ENCODE measurements at regions of chr1 and their contacts with region 1.

Region 1: DNA sequence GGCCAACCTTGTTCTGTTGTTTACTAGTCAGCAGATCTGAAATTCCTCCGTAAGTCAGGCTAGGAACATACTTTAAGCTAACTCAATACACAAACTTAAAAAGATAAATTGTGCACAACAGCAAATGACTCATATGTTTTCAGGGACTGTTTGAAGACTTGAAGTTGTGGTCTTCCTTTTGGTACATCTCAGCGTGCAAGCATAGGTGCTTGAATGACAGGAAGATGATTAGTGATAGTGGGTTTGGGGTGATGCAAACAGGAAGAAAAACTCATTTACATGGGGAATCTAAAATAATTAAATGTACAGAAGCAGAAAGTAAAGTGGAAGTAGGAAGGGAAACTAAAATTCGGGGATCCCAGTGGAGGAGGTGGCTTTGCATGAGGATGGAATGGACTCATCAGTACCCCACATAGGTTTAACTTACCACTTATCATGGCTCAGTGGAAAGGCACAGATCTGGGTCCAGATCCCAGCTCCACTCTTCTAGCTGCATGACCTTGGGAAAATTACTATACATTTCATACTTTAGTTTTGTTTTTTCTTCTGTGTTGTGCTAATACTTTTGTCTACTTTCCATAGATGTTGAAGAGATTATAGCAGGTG is 122.3 kb downstream of the XCL2 start:
- DNase-seq: peak; percentile 29
- H3K4me3 Mint-ChIP-seq: peak overlapping the region; percentile 49
- H3K27ac Mint-ChIP-seq: peak overlapping the region; percentile 78
- H3K4me1 Mint-ChIP-seq: peaks cover 33% of the 10 kb centered on the region
- H3K27me3 Mint-ChIP-seq: no peaks in the 10 kb centered on the region

Region 2: GRCh38 chr1:168372307-168372706 is 49.2 kb before region 1 on chr1:
- CTCF ChIA-PET with region 1: no interaction called
- POLR2A ChIA-PET with region 1: no interaction called
- intact Hi-C with region 1: no loop called
- DNase-seq: no peak
- H3K4me3 Mint-ChIP-seq: no peak overlapping the region
- H3K27ac Mint-ChIP-seq: no peak overlapping the region
- H3K4me1 Mint-ChIP-seq: no peaks in the 10 kb centered on the region
- H3K27me3 Mint-ChIP-seq: no peaks in the 10 kb centered on the region

Region 3: DNA sequence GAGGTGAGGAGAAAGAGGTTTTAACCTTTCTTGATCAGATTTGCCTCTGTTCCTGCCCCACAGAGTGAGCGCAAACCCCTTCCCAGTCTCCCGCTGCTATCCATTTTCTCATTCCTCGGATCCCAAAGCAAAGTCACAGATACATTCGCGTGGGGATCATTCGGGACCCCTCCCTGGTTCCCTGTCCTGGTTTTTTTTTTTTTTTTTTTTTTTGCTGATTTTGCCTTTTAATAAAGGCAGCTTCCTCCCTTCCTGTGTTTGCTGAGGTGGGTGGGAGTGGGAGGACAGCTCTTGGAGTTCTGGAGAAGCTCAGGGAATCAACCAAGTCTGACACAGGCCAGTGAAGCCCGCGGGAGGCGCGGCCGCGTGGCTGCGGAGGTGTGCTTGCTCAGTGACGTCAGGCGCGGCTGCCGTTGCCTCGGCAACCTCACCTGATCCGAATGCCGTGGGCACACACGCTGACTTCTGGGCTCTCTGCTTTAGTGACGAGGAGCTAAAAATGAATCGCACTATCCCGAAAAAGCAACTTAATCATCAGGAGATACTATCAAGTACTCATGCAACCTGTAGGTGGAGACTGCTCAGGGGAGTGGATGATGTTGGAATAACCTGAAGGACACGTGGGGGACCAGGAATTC is 34.4 kb before region 1 on chr1:
- CTCF ChIA-PET with region 1: no interaction called
- POLR2A ChIA-PET with region 1: no interaction called
- intact Hi-C with region 1: loop called (anchors 2 kb)
- DNase-seq: peak; percentile 87
- H3K4me3 Mint-ChIP-seq: peak overlapping the region; percentile 33
- H3K27ac Mint-ChIP-seq: peak overlapping the region; percentile 11
- H3K4me1 Mint-ChIP-seq: peaks cover 17% of the 10 kb centered on the region
- H3K27me3 Mint-ChIP-seq: peaks cover 2% of the 10 kb centered on the region

Region 4: GRCh38 chr1:168408536-168409242 is 12.8 kb before region 1 on chr1:
- CTCF ChIA-PET with region 1: interaction called, 3 read pairs
- POLR2A ChIA-PET with region 1: interaction called, 7 read pairs
- intact Hi-C with region 1: loop called (anchors 1 kb)
- DNase-seq: peak; percentile 75
- H3K4me3 Mint-ChIP-seq: peak overlapping the region; percentile 9
- H3K27ac Mint-ChIP-seq: peak overlapping the region; percentile 53
- H3K4me1 Mint-ChIP-seq: peaks cover 40% of the 10 kb centered on the region
- H3K27me3 Mint-ChIP-seq: no peaks in the 10 kb centered on the region

Region 5: DNA sequence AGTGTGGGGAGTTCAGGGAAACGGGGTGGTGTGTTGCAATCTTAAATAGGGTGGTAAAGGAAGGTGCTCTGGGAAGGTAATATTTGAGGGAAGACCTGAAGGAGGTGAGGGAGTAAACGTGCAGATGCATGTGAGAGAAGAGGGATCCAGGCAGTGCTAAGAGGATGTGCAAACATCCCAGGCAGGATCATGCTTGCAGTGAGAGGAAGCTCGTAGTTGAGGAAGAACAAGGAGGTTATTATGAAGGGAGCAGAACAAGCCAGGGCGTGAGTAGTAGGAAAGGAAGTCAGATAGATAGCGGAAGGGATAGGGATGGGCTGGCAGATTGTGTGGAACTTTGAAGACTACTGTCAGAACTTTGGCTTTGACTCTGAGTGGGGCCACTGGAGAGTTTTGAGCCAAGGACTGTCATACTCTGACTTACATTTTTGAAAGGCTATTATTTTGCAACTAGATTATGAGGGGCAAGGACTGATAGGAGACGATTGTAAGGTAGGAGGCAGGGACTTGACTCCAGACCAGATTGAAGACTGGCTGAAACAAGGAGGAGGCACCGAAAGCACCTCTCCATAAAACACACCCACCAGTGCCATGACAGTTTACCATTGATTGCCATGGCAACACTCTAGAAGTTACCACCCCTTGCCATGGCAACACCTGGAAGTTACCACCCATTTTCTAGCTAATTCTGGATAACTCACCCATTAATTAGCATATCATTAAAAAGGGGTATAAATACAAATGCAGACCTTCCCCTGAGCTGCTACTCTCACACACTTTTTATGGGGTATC is 55.3 kb after region 1 on chr1:
- CTCF ChIA-PET with region 1: no interaction called
- POLR2A ChIA-PET with region 1: no interaction called
- intact Hi-C with region 1: no loop called
- DNase-seq: no peak
- H3K4me3 Mint-ChIP-seq: no peak overlapping the region
- H3K27ac Mint-ChIP-seq: no peak overlapping the region
- H3K4me1 Mint-ChIP-seq: peaks cover 26% of the 10 kb centered on the region
- H3K27me3 Mint-ChIP-seq: no peaks in the 10 kb centered on the region

Region 6: DNA sequence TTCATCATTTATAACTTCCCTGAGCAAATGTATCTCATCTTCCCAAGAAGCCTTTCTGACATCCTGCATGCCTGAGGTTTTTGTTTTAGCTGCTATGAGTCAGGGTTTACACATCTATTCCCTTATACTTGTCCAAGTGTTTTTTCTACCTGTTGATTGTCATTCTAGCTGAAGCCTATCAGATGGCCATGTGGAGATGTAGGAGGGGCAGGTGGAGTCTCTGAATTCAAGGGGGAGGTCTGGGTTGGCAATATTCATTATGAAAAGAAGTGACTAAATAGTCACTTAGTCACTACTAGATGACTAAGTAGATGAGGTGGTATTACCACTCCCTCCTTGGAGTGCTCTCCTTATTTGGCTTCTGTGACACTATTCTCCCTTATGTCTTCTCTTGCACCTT is 207.3 kb after region 1 on chr1:
- CTCF ChIA-PET with region 1: no interaction called
- POLR2A ChIA-PET with region 1: no interaction called
- intact Hi-C with region 1: loop called (anchors 1 kb)
- DNase-seq: peak; percentile 21
- H3K4me3 Mint-ChIP-seq: no peak overlapping the region
- H3K27ac Mint-ChIP-seq: no peak overlapping the region
- H3K4me1 Mint-ChIP-seq: peaks cover 8% of the 10 kb centered on the region
- H3K27me3 Mint-ChIP-seq: peaks cover 16% of the 10 kb centered on the region